ENCODE measurements at regions of chr22 and their contacts with region 1.

Region 1: DNA sequence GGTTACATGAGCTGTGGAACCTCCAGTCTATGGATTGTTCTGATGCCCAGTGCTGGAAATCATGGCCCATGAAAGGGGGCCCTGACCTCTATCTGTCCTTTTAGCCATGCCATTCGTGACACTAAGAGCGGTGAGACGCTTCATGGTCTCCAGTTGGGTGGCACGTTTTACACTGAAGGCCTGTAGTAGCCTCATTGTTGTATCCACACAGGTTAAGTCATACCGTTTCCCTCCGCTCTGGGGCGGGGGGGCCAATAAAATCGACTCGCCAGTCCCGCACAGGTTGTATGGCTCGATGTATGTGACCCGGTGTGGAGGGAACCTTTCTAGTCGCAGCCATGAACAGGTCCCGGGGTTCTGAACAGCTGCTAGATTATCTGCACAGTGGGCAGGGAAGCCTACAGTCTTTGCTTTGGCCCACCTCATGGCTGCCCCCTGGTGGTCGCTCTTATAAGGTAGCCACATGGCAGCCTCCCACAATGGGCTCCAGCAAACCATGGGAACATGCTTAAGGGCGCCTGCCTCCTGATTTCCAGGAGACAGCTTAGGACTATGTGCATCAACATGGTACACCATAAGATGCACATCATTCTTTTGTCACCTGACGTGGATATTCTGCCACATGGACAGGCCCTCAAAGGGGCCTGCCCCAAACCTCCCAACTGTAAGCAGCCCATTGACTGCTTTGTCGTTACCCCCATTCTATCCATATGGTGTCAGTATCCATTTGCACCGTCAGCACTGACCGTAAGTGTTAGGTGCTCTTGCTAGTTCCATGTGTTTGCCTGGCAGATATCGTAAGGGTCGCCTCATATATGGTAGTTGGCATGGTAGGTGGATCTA is 19.7 kb upstream of the APOL3 start:
- DNase-seq: peak; percentile 79 to 95 (median 85)
- ATAC-seq: peak; percentile 95
- H3K4me3 ChIP-seq: no peak overlapping the region
- H3K4me1 ChIP-seq: no peaks in the 10 kb centered on the region
- CTCF ChIP-seq: peak; percentile 78

Region 2: GRCh38 chr22:36144886-36145541 is 35.2 kb before region 1 on chr22:
- intact Hi-C with region 1: loop called in 1 of 2 experiments (anchors 5 kb)
- DNase-seq: peak in 2 of 3 donors; percentile 44 to 56
- ATAC-seq: peak; percentile 80
- H3K4me3 ChIP-seq: no peak overlapping the region
- H3K4me1 ChIP-seq: no peaks in the 10 kb centered on the region
- CTCF ChIP-seq: peak; percentile 15

Measured in mucosa of descending colon (tissue), 3 donors.